Caco-2 (cell line): ENCODE measurements at regions of chr13 and their contacts with region 1.

Region 1: DNA sequence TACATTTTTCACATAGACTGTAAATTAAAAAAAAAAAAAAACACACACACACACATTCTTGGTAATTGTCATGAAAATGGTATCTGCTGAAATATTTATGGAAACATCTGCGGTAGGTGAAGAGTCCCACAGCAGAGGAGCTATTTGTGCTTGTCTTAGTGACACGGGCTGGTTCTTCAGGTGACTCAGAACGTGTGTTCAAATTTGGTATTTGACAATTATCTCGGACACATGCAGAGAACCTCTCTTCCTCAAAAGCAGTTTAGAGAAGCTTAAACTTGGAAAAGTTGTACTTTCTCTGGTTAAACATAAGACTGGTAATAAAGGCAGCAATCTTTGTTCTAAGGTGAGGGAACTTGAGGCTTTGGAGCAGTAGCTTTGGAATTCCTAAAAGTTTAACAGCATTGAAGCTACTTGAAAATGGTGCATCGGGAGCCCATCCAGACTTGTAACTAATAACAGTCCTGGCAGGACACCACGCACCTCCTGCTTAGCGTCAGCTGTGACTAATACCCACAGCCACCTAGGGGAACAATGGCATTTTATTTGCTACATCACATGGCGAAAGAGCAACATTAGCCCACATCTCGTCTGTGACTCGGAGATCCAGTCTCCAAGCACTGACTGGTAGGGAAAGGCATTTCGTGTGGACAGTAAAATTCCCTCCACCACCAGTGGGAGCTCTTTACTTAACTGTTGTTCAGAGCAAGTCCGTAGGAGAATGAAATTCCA is 1505.1 kb upstream of the SLC10A2 start:
- DNase-seq: peak; percentile 71 to 73
- H3K4me3 ChIP-seq: no peak overlapping the region
- H3K4me3 Mint-ChIP-seq: no peak overlapping the region
- H3K27ac Mint-ChIP-seq: no peak overlapping the region
- H3K4me1 ChIP-seq: no peaks in the 10 kb centered on the region
- H3K4me1 Mint-ChIP-seq: no peaks in the 10 kb centered on the region
- H3K27me3 ChIP-seq: 0 out of 2 replicates have a peak, but pooled peaks cover 1% of the 10 kb centered on the region
- H3K27me3 Mint-ChIP-seq: peaks cover 4% of the 10 kb centered on the region
- CTCF ChIP-seq: peak; percentile 68 to 73

Region 2: GRCh38 chr13:104327211-104327610 is 244.1 kb before region 1 on chr13:
- CTCF ChIA-PET with region 1: no interaction called
- POLR2A ChIA-PET with region 1: no interaction called
- intact Hi-C with region 1: no loop called
- DNase-seq: no peak
- H3K4me3 ChIP-seq: no peak overlapping the region
- H3K4me3 Mint-ChIP-seq: no peak overlapping the region
- H3K27ac Mint-ChIP-seq: no peak overlapping the region
- H3K4me1 ChIP-seq: no peaks in the 10 kb centered on the region
- H3K4me1 Mint-ChIP-seq: no peaks in the 10 kb centered on the region
- H3K27me3 ChIP-seq: no peaks in the 10 kb centered on the region
- H3K27me3 Mint-ChIP-seq: no peaks in the 10 kb centered on the region
- CTCF ChIP-seq: no peak

Region 3: DNA sequence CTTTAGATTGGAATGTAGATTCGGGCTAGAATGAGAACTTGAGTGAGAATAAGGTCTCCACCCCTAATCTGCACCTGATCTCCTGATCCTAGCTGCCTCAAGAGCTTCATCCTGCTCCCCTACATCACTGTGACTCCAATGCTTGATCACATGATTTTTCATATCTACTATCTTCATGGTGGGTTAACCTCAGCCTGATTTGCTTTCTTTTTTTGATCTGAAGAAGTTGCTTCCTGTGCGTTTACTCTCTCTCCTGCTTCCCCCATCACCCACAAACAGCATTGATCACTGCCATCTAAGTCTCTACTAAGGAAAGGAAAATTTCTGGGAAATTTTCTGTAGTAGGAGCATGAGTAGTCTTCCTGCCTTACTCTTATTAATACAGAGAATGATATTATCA is 37.0 kb after region 1 on chr13:
- CTCF ChIA-PET with region 1: interaction called, 3 read pairs
- POLR2A ChIA-PET with region 1: no interaction called
- intact Hi-C with region 1: loop called (anchors 2 kb)
- DNase-seq: no peak
- H3K4me3 ChIP-seq: no peak overlapping the region
- H3K4me3 Mint-ChIP-seq: no peak overlapping the region
- H3K27ac Mint-ChIP-seq: no peak overlapping the region
- H3K4me1 ChIP-seq: no peaks in the 10 kb centered on the region
- H3K4me1 Mint-ChIP-seq: no peaks in the 10 kb centered on the region
- H3K27me3 ChIP-seq: no peaks in the 10 kb centered on the region
- H3K27me3 Mint-ChIP-seq: peaks cover 3% of the 10 kb centered on the region
- CTCF ChIP-seq: no peak

Region 4: GRCh38 chr13:104632736-104633135 is 61.4 kb after region 1 on chr13:
- CTCF ChIA-PET with region 1: no interaction called
- POLR2A ChIA-PET with region 1: no interaction called
- intact Hi-C with region 1: no loop called
- DNase-seq: no peak
- H3K4me3 ChIP-seq: no peak overlapping the region
- H3K4me3 Mint-ChIP-seq: no peak overlapping the region
- H3K27ac Mint-ChIP-seq: no peak overlapping the region
- H3K4me1 ChIP-seq: no peaks in the 10 kb centered on the region
- H3K4me1 Mint-ChIP-seq: no peaks in the 10 kb centered on the region
- H3K27me3 ChIP-seq: no peaks in the 10 kb centered on the region
- H3K27me3 Mint-ChIP-seq: no peaks in the 10 kb centered on the region
- CTCF ChIP-seq: no peak

Region 5: DNA sequence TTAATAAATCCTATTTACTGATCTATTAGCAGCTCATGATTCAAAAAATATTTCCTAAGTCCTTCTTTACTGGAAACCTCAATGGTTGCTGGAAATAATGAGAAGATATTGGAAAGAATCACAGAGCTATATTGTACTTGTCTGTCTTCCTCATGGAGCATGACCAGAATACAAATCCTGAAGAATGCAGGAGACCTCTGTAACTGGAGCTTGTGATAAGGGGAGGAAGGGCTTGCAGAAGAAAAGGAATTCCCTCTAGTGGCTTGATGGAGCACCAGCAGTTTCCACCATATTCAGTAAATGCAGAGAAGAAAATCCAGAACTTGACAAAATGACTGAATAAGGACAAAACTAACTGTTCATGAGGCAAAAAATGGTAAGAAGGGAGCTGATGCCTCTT is 631.0 kb after region 1 on chr13:
- CTCF ChIA-PET with region 1: no interaction called
- POLR2A ChIA-PET with region 1: no interaction called
- intact Hi-C with region 1: loop called (anchors 1 kb)
- DNase-seq: peak in 1 of 2 experiments; percentile 14
- H3K4me3 ChIP-seq: no peak overlapping the region
- H3K4me3 Mint-ChIP-seq: no peak overlapping the region
- H3K27ac Mint-ChIP-seq: peak overlapping the region; percentile 20
- H3K4me1 ChIP-seq: no peaks in the 10 kb centered on the region
- H3K4me1 Mint-ChIP-seq: peaks cover 6% of the 10 kb centered on the region
- H3K27me3 ChIP-seq: no peaks in the 10 kb centered on the region
- H3K27me3 Mint-ChIP-seq: peaks cover 2% of the 10 kb centered on the region
- CTCF ChIP-seq: peak; percentile 38 to 59